A673 (cell line): ENCODE measurements at regions of chr7 and their contacts with region 1.

Region 1: DNA sequence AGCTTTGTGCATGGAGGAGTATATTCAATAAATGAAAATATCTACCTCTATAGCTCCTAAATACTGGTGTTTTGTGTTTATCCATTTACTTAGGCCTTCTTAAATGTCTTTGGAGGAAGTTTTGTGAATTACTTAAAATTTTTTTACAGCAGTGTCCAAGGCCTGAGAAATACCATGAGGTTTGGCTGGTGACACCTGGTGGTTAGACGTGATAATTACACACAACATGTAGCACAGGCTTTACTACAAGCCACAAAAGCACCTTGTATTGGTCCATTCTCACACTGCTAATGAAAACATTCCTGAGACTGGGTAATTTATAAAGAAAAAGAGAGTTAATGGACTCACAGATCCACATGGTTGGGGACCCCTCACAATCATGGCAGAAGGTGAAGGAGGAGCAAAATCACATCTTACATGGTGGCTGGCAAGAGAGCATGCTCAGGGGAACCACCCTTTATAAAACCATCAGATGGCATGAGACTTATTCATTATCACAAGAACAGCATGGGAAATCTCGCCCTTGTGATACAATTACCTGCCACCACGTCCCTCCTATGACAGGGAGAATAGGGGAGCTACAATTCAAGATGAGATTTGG is 20.6 kb downstream of the HYAL4 start:
- DNase-seq: peak; percentile 66
- H3K4me3 ChIP-seq: no peak overlapping the region
- H3K27ac ChIP-seq: no peak overlapping the region
- H3K4me1 ChIP-seq: no peaks in the 10 kb centered on the region
- H3K27me3 ChIP-seq: no peaks in the 10 kb centered on the region
- CTCF ChIP-seq: peak; percentile 75

Region 2: DNA sequence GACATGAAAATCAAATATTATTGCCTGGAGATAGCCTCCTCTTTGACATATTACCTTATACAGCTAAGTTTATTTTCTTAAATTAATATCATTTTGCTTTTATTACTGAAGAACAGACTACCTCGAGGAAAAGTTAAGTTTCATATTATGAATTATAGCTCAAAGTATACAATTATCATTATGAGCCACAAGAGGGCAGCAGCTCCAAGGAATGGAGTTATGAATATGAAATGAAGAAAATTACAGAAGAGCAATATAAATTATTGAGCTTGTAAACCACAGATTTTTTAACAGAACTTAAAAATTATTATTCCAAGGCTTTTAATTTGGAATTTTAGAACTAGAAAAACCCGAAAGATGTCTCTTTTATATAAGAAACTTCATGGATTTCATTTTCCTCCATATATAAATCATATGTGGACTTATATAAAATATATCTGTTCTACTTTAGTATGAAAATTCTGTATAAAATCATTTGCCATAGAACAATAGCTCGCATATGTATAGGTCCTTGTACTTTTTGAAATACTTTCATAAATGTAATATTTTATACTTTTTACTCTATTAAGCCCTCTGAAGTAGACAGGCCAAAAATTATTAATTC is 371.3 kb before region 1 on chr7:
- CTCF ChIA-PET with region 1: no interaction called
- POLR2A ChIA-PET with region 1: no interaction called
- intact Hi-C with region 1: loop called (anchors 10 kb)
- DNase-seq: peak; percentile 53
- H3K4me3 ChIP-seq: no peak overlapping the region
- H3K27ac ChIP-seq: no peak overlapping the region
- H3K4me1 ChIP-seq: no peaks in the 10 kb centered on the region
- H3K27me3 ChIP-seq: no peaks in the 10 kb centered on the region
- CTCF ChIP-seq: peak; percentile 81

Region 3: GRCh38 chr7:123580406-123581161 is 285.0 kb before region 1 on chr7:
- CTCF ChIA-PET with region 1: no interaction called
- POLR2A ChIA-PET with region 1: no interaction called
- intact Hi-C with region 1: loop called (anchors 1 kb)
- DNase-seq: peak; percentile 60
- H3K4me3 ChIP-seq: no peak overlapping the region
- H3K27ac ChIP-seq: no peak overlapping the region
- H3K4me1 ChIP-seq: no peaks in the 10 kb centered on the region
- H3K27me3 ChIP-seq: no peaks in the 10 kb centered on the region
- CTCF ChIP-seq: peak; percentile 75

Region 4: DNA sequence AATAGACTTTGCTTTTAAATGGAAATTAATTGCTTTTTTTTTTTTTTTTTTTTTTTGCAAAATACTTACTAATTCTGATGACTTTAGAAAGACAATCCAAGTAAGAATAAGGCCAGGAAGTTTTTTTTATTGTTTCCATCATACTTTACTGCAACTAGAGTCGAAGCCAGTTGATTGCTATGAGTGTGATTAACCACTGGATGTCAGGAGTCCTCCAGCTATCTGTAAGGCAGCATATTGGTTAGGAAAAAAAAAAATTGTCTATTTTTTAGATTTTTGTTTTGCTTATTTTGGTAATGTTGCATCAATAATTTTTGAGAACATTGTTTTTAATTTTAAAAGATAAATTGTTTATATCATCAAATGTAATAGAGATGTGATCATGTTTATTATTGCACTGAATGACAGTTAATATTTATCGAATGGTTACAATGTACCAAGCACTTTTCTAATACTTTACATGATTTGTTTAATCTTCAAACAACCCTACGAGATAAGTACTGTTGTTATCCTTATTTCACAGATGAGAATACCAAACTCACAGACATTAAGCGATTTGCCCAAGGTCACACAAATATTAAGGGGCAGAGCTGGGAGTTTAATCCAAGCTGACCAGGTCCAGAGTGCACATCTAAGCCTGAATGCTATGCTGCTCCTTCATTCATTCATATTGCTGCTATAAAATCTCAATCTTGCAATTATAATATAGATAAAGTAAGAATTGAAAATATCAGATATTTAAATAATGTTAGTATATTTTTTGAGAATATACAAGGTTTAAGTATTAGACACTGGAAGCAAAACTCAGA is 229.9 kb before region 1 on chr7:
- CTCF ChIA-PET with region 1: interaction called, 5 read pairs
- POLR2A ChIA-PET with region 1: no interaction called
- intact Hi-C with region 1: loop called (anchors 2 kb)
- DNase-seq: peak; percentile 54
- H3K4me3 ChIP-seq: no peak overlapping the region
- H3K27ac ChIP-seq: no peak overlapping the region
- H3K4me1 ChIP-seq: no peaks in the 10 kb centered on the region
- H3K27me3 ChIP-seq: no peaks in the 10 kb centered on the region
- CTCF ChIP-seq: peak; percentile 76

Region 5: DNA sequence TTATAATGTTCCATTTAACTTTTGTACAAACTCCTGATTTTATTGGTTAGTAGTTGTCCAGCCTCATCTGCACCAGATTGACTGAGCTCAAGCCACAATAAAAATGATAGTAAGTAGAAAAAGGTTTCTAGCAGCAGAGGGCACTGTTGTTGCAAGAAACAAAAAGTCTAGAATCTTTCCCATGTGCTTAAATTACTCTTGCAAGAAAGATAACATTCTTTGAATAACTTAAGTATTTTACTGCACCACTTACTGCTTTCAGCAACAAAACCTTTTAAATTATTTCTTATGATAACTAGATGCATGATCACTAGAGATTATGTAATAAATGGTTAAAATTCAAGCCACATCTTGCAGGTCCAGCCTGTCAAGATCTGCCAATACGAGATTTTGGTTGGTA is 182.9 kb before region 1 on chr7:
- CTCF ChIA-PET with region 1: no interaction called
- POLR2A ChIA-PET with region 1: no interaction called
- intact Hi-C with region 1: loop called (anchors 1 kb)
- DNase-seq: peak; percentile 71
- H3K4me3 ChIP-seq: no peak overlapping the region
- H3K27ac ChIP-seq: no peak overlapping the region
- H3K4me1 ChIP-seq: no peaks in the 10 kb centered on the region
- H3K27me3 ChIP-seq: no peaks in the 10 kb centered on the region
- CTCF ChIP-seq: peak; percentile 69

Region 6: DNA sequence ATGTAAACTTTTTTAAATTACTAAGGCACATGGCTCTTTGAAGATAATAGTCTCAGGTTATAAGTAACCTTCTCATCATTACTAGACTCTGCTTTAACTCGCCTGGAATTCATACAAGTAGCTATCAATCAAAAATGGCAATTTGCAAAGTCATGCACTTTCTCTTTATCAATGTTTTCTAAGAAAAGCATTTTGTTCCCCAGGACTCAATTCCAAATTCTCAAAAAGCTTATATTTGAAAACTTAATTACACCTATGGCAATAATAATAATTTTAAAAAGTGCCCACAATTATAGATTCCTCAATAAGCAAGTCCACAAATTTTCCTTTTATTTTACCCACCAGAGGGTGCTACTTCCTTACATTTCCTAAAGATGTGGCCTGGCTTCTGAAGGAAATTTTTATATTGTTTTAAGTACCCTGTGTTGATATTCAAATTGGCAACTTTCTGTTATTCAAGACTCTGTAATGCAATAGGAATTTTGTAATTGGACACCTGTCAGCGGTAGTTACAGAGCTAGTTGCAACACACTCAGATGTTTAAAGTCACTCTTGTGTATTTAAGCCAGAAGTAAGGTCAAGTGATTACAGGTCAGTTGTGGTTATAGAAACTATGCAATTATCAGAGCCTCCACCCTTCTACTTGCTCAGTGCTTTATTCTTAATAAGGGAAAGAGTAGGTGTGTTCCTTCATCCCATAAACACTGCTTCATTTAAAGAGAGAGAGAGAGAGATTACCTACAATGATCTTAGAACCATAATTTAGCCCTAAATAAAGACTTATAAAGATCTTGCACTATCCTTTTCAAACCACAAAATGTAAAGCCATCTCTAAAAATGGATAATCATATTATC is 67.7 kb before region 1 on chr7:
- CTCF ChIA-PET with region 1: interaction called, 10 read pairs
- POLR2A ChIA-PET with region 1: no interaction called
- intact Hi-C with region 1: loop called (anchors 1 kb)
- DNase-seq: peak; percentile 70
- H3K4me3 ChIP-seq: no peak overlapping the region
- H3K27ac ChIP-seq: no peak overlapping the region
- H3K4me1 ChIP-seq: no peaks in the 10 kb centered on the region
- H3K27me3 ChIP-seq: no peaks in the 10 kb centered on the region
- CTCF ChIP-seq: peak; percentile 72